Ascending aorta (tissue), 2 donors: ENCODE measurements at regions of chr14 and their contacts with region 1.

Region 1: DNA sequence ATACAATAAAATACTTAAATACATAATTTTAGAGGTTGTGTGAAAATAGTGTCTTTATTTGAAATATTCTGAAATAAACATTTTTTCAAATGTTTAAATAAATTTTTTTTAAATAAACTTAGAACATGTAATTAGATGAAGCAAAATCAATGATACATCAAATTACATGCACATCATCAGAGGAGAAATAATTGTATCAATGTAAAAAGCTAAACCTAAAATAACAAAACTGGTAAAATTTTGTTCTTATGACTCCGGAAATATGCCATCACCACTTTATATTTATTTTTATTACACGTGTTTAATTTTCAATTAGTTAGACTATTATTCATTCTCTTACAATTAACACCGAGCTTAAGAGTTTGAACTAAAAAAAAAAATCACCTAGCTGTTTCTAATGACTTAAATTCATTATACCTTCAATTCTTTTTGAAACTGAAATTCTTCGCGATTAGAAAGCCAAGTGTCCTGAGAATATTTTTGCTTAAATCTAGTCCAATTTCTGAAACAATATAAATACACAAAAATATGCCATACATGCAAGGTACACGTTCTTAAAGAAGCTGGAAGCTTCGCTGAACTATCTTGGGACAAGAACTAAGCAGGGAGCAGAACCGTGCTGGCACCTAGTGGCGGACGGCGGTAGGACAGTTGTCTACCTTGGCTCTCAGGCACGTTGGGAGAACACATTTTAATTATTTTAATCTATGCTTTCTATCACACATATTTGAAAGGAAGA is 230.5 kb downstream of the SLC25A21 start:
- DNase-seq: peak in 1 of 2 donors; percentile 76
- H3K4me3 ChIP-seq: no peak overlapping the region
- H3K27ac ChIP-seq: no peak overlapping the region
- H3K4me1 ChIP-seq: no peaks in the 10 kb centered on the region
- H3K27me3 ChIP-seq: no peaks in the 10 kb centered on the region
- CTCF ChIP-seq: peak; percentile 61 to 93 (median 90)

Region 2: GRCh38 chr14:36553656-36554260 is 388.2 kb before region 1 on chr14:
- intact Hi-C with region 1: loop called (anchors 2 kb)
- DNase-seq: no peak
- H3K4me3 ChIP-seq: no peak overlapping the region
- H3K27ac ChIP-seq: no peak overlapping the region
- H3K4me1 ChIP-seq: no peaks in the 10 kb centered on the region
- H3K27me3 ChIP-seq: no peaks in the 10 kb centered on the region
- CTCF ChIP-seq: peak in 2 of 3 experiments; percentile 47 to 62

Region 3: GRCh38 chr14:36647824-36648753 is 293.9 kb before region 1 on chr14:
- intact Hi-C with region 1: loop called (anchors 5 kb)
- DNase-seq: no peak
- H3K4me3 ChIP-seq: peak overlapping the region; percentile 54 to 60
- H3K27ac ChIP-seq: no peak overlapping the region
- H3K4me1 ChIP-seq: peaks cover 5 to 13% of the 10 kb centered on the region in 2 donors
- H3K27me3 ChIP-seq: no peaks in the 10 kb centered on the region
- CTCF ChIP-seq: peak; percentile 22 to 59 (median 31)

Region 4: GRCh38 chr14:36829547-36829946 is 112.4 kb before region 1 on chr14:
- intact Hi-C with region 1: no loop called
- DNase-seq: no peak
- H3K4me3 ChIP-seq: no peak overlapping the region
- H3K27ac ChIP-seq: no peak overlapping the region
- H3K4me1 ChIP-seq: no peaks in the 10 kb centered on the region
- H3K27me3 ChIP-seq: no peaks in the 10 kb centered on the region
- CTCF ChIP-seq: no peak

Region 5: GRCh38 chr14:36996133-36996856 is 54.3 kb after region 1 on chr14:
- intact Hi-C with region 1: no loop called
- DNase-seq: no peak
- H3K4me3 ChIP-seq: no peak overlapping the region
- H3K27ac ChIP-seq: no peak overlapping the region
- H3K4me1 ChIP-seq: peaks cover 0 to 3% of the 10 kb centered on the region in 2 donors
- H3K27me3 ChIP-seq: no peaks in the 10 kb centered on the region
- CTCF ChIP-seq: no peak

Region 6: GRCh38 chr14:37116933-37117849 is 175.2 kb after region 1 on chr14:
- intact Hi-C with region 1: loop called (anchors 10 kb)
- DNase-seq: no peak
- H3K4me3 ChIP-seq: no peak overlapping the region
- H3K27ac ChIP-seq: peak overlapping the region in 1 of 2 donors; percentile 7
- H3K4me1 ChIP-seq: peaks cover 0 to 6% of the 10 kb centered on the region in 2 donors
- H3K27me3 ChIP-seq: no peaks in the 10 kb centered on the region
- CTCF ChIP-seq: peak; percentile 14 to 65 (median 44)